Sigmoid colon (tissue), 7 donors: ENCODE measurements at regions of chr12 and their contacts with region 1.

Region 1: GRCh38 chr12:26011099-26011498 is 52.6 kb downstream of the RASSF8 start:
- DNase-seq: peak; percentile 71
- H3K4me3 ChIP-seq: no peak overlapping the region
- H3K27ac ChIP-seq: peak overlapping the region; percentile 63 to 88 (median 80)
- H3K4me1 ChIP-seq: peaks cover 0 to 74% (median 42%) of the 10 kb centered on the region in 4 donors
- H3K27me3 ChIP-seq: no peaks in the 10 kb centered on the region
- CTCF ChIP-seq: no peak
- EP300 ChIP-seq: peak in 2 of 4 donors; percentile 34 to 61
- POLR2A ChIP-seq: no peak

Region 2: DNA sequence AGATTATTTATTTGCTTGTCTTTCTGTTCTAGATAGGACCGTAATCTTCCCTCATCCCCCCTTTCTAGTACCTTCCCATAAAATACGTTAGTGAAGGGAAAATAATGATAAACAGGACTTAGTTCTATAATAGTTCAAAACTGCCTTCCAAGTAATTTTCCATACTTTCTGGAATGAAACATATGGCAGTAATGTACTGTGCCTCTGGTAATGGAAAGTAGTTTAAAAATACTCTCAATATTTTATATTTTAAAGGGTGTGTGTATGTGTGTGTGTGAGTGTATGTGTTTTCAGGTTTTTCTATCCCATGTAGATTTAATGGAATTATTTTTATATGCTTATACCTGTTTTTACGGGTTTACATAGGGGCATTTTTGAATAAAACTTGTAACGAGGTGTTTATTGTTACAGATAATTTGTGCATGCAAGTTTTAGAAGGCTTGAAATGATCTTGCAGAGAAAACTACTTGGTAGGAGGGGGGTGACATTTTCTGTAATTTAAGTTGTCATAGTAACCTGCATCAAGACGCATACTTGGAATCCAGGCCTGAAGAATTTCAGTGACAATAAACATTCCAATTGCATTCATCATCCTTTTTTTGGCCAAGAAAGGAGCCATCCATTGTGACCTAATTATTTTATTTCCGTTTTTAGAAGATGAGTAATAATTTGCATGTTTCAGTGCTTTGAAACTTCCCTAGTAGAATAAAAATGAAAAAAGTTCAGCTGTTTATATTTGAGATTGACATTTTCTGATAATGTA is 13.7 kb before region 1 on chr12:
- intact Hi-C with region 1: loop called (anchors 2 kb)
- DNase-seq: no peak
- H3K4me3 ChIP-seq: no peak overlapping the region
- H3K27ac ChIP-seq: peak overlapping the region; percentile 28 to 82 (median 69)
- H3K4me1 ChIP-seq: peaks cover 0 to 61% (median 58%) of the 10 kb centered on the region in 4 donors
- H3K27me3 ChIP-seq: no peaks in the 10 kb centered on the region
- CTCF ChIP-seq: no peak
- EP300 ChIP-seq: no peak
- POLR2A ChIP-seq: no peak